IMR-90 (cell line): ENCODE measurements at regions of chr4 and their contacts with region 1.

Region 1: DNA sequence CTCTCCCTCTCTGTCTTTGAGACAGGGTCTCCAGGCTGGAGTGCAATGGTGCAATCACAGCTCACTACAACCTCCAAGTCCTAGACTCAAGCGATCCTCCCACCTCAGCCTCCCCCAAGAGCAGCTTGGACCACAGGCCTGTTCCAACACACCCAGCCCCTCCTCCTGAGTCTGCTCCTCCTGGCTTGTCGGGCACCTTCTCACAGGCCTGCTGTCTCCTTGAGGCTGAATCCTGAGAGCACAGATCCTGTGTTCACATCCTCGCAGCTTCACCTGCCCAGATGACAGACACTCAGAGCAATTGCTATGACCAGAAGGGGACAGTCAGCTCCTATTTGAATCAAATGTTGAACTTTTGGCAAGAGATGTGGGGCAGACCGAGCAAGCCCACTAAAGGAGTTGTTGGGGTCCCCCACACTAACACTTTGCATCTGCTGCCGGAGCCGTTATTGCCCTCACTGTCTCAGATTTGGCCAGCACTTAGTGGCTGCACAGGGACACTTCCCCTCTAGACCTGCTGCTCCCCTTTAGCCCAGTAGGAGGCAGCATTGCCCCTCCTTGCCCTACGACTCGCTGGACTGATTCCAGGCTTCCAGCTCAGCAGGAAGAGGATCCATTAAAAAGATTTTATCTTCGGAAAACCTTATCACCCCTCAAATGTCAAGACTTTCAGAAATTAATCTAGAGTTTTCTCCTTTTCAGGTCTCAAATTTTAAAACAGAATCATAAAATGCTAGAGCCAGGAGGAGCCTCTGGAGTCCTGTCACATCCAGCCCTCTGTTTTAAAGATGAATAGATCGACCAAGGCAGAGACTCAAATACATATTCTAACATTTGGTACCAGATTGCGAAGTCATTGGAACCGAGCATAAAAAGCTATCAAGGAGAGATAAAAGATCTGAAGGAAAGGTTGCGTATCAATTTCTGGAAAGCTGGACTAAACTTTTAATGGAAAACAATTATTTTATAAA is 113.7 kb downstream of the USP46 start:
- DNase-seq: peak; percentile 65
- ATAC-seq: peak; percentile 95
- H3K4me3 ChIP-seq: no peak overlapping the region
- H3K27ac ChIP-seq: no peak overlapping the region
- H3K4me1 ChIP-seq: no peaks in the 10 kb centered on the region
- H3K27me3 ChIP-seq: no peaks in the 10 kb centered on the region
- CTCF ChIP-seq: peak; percentile 98
- POLR2A ChIP-seq: peak; percentile 53; the same call in 1 of the 2 replicates
- RAD21 ChIP-seq: peak; percentile 99

Region 2: DNA sequence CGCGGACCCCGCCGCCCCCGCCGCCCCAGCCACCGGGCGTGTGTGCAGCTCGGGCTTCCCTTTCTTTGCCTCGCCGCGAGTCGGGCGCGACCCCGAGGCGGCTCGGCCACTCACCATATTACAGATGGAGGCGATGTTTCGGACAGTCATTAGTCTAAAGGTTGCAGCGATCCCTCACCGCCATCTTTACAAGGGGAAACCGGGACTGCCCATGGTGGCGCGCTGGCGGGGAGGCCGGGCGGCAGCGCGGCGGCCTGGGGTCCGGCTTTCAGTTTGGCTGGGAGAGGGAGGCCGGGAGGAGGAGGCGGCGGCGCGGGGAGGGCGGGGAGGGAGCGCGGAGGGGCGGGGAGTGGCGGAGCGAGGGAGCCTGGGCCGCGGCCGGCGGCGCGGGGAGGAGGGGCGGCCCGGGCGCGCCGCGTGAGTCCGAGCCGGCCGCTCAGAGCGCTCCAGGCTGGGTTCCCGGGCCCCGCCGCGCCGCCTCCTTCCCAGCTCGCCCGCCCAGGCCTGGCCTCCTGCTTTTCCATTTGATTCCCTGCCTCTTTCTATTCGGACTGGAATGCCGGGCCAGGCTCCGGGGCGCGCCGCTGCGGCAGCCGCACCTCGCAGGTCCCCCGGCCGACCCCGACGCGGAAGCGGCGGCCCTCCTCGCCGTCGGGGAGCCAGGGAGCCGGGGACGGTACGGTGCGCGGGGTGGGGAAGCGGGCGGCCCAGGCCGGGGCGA is 113.8 kb after region 1 on chr4 and contains the start of gene USP46:
- CTCF ChIA-PET with region 1: interaction called, 4 read pairs
- POLR2A ChIA-PET with region 1: no interaction called
- dilution Hi-C with region 1: no loop called
- in situ Hi-C with region 1: no loop called
- intact Hi-C with region 1: loop called (anchors 2 kb)
- DNase-seq: peak; percentile 69
- ATAC-seq: peak; percentile 92
- H3K4me3 ChIP-seq: peak within 1 kb of the TSS; percentile 99
- H3K27ac ChIP-seq: peak within 1 kb of the TSS; percentile 99
- H3K4me1 ChIP-seq: peaks cover 4% of the 10 kb centered on the region
- H3K27me3 ChIP-seq: no peaks in the 10 kb centered on the region
- CTCF ChIP-seq: no peak
- POLR2A ChIP-seq: no peak
- RAD21 ChIP-seq: no peak
- total RNA-seq, gene USP46: 15.4 and 20.3 TPM in 2 replicates

Region 3: GRCh38 chr4:52861879-52862616 is 316.7 kb after region 1 on chr4 and contains the start of gene RASL11B:
- CTCF ChIA-PET with region 1: no interaction called
- POLR2A ChIA-PET with region 1: no interaction called
- dilution Hi-C with region 1: no loop called
- in situ Hi-C with region 1: no loop called
- intact Hi-C with region 1: loop called (anchors 2 kb)
- DNase-seq: peak; percentile 52
- ATAC-seq: peak; percentile 98
- H3K4me3 ChIP-seq: peak within 1 kb of the TSS; percentile 89
- H3K27ac ChIP-seq: peak within 1 kb of the TSS; percentile 55; the same call in 1 of the 2 replicates
- H3K4me1 ChIP-seq: peaks cover 9% of the 10 kb centered on the region
- H3K27me3 ChIP-seq: peaks cover 8% of the 10 kb centered on the region
- CTCF ChIP-seq: no peak; the same call in 1 of the 2 replicates
- POLR2A ChIP-seq: no peak; the same call in 1 of the 2 replicates
- RAD21 ChIP-seq: no peak
- total RNA-seq, gene RASL11B: 0.18 and 0.28 TPM in 2 replicates